Activated B cell treated with CpG ODN at 0.5 μM for 24 hours (primary cell): ENCODE measurements at regions of chr11 and their contacts with region 1.

Region 1: GRCh38 chr11:67572747-67573419 is 10.7 kb upstream of the GSTP1 start:
- DNase-seq: no peak
- ATAC-seq: peak; percentile 28
- H3K4me3 Mint-ChIP-seq: no peak overlapping the region
- H3K27ac Mint-ChIP-seq: no peak overlapping the region
- H3K4me1 Mint-ChIP-seq: peaks cover 9% of the 10 kb centered on the region
- H3K27me3 Mint-ChIP-seq: peaks cover 25% of the 10 kb centered on the region
- CTCF ChIP-seq: no peak

Region 2: GRCh38 chr11:67583247-67584204 is 10.6 kb after region 1 on chr11 and contains the start of gene GSTP1:
- CTCF ChIA-PET with region 1: interaction called, 5 read pairs
- POLR2A ChIA-PET with region 1: interaction called, 6 read pairs
- intact Hi-C with region 1: loop called (anchors 1 kb)
- DNase-seq: peak; percentile 84
- ATAC-seq: peak; percentile 76
- H3K4me3 Mint-ChIP-seq: peak within 1 kb of the TSS; percentile 89
- H3K27ac Mint-ChIP-seq: peak within 1 kb of the TSS; percentile 99
- H3K4me1 Mint-ChIP-seq: peaks cover 76% of the 10 kb centered on the region
- H3K27me3 Mint-ChIP-seq: no peaks in the 10 kb centered on the region
- CTCF ChIP-seq: no peak
- total RNA-seq, gene GSTP1: 331 and 362 TPM in 2 replicates

Region 3: DNA sequence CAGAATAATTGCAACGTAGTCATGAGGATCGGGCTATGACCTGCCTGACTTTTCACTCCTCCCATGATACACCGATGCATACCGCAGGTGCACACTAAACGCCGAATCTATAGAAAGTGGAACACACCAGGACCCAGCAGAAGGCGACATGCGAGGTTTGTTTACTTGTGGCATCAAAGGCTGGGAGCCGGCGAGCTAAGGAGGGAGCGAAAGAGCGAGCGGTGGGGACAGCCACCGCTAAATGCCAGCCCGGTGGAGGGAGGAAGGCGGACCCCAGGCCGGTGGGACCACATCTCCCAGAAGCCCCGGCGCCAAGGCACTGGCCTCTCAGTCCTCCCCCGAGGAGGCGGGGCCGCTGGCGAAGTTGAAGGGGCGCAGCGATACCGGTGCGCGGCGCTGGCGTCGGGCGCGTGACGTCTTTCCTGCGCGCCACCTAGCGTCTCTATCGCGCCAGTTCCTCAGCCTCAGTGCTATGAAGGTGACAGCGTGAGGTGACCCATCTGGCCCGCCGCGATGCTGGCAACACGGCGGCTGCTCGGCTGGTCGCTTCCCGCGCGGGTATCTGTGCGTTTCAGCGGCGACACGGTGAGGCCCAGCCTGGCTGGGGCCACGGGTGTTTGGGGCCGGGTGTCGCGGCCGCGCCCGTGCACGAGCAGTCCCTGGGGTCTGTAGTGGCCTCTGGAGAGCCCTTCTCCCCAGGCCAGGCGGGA is 33.8 kb after region 1 on chr11 and contains the start of gene NDUFV1:
- CTCF ChIA-PET with region 1: interaction called, 4 read pairs
- POLR2A ChIA-PET with region 1: no interaction called
- intact Hi-C with region 1: loop called (anchors 1 kb)
- DNase-seq: peak; percentile 93
- ATAC-seq: peak; percentile 99
- H3K4me3 Mint-ChIP-seq: peak within 1 kb of the TSS; percentile 90
- H3K27ac Mint-ChIP-seq: peak within 1 kb of the TSS; percentile 73
- H3K4me1 Mint-ChIP-seq: peaks cover 24% of the 10 kb centered on the region
- H3K27me3 Mint-ChIP-seq: peaks cover 11% of the 10 kb centered on the region
- CTCF ChIP-seq: no peak
- total RNA-seq, gene NDUFV1: 207 and 221 TPM in 2 replicates

Region 4: GRCh38 chr11:67613960-67614715 is 41.3 kb after region 1 on chr11:
- CTCF ChIA-PET with region 1: interaction called, 12 read pairs
- POLR2A ChIA-PET with region 1: interaction called, 6 read pairs
- intact Hi-C with region 1: loop called (anchors 2 kb)
- DNase-seq: peak; percentile 81
- ATAC-seq: peak; percentile 95
- H3K4me3 Mint-ChIP-seq: peak overlapping the region; percentile 84
- H3K27ac Mint-ChIP-seq: peak overlapping the region; percentile 99
- H3K4me1 Mint-ChIP-seq: peaks cover 41% of the 10 kb centered on the region
- H3K27me3 Mint-ChIP-seq: no peaks in the 10 kb centered on the region
- CTCF ChIP-seq: no peak

Region 5: GRCh38 chr11:67630228-67630942 is 57.5 kb after region 1 on chr11:
- CTCF ChIA-PET with region 1: interaction called, 16 read pairs
- POLR2A ChIA-PET with region 1: interaction called, 3 read pairs
- intact Hi-C with region 1: loop called (anchors 1 kb)
- DNase-seq: peak; percentile 92
- ATAC-seq: peak; percentile 78
- H3K4me3 Mint-ChIP-seq: peak overlapping the region; percentile 87
- H3K27ac Mint-ChIP-seq: peak overlapping the region; percentile 88
- H3K4me1 Mint-ChIP-seq: peaks cover 13% of the 10 kb centered on the region
- H3K27me3 Mint-ChIP-seq: no peaks in the 10 kb centered on the region
- CTCF ChIP-seq: no peak

Region 6: DNA sequence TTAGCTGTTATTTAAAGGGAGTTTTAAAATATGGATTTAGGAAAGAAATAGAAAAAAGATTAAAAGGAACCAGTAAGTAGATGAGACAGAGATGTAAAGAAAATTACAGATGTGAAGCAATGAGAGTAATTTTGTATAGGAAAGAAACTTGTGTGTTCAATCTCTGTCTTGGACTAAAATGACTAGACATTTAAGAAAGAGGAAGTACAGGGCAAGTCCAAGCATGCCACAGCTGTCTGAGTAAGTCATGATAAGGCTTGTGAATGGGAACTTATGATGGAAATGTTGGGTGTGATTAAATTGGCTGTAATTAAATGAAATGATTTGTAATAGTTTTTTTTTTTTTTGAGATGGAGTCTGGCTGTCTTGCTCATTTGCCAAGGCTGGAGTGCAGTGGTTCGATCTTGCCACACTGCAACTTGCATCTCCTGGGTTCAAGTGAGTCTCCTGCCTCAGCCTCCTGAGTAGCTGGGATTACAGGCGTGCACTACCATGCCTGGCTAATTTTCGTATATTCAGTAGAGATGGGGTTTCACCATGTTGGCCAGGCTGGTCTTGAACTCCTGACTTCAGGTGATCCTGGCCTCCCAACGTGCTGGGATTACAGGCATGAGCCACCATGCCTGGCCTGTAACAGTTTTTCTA is 83.5 kb after region 1 on chr11:
- CTCF ChIA-PET with region 1: interaction called, 6 read pairs
- POLR2A ChIA-PET with region 1: no interaction called
- intact Hi-C with region 1: loop called (anchors 1 kb)
- DNase-seq: no peak
- ATAC-seq: peak; percentile 43
- H3K4me3 Mint-ChIP-seq: no peak overlapping the region
- H3K27ac Mint-ChIP-seq: no peak overlapping the region
- H3K4me1 Mint-ChIP-seq: peaks cover 8% of the 10 kb centered on the region
- H3K27me3 Mint-ChIP-seq: no peaks in the 10 kb centered on the region
- CTCF ChIP-seq: no peak

Region 7: DNA sequence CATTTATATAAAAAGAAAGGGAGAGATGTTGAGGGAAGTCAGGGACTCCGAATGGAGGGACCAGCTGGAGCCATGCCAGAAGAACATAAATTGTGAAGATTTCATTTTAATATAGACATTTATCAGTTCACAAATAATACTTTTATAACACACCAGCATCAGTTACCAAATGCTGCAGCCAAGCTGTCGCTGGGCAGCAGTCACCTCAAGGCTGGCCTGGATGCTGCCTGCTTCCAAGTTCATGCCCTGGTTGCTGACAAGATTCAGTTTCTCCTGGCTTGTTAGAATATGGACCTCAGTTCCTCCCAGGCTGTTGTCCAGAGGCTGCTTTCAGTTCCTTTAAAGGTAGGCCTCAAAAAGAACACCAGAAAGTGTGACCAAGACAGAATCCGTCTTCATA is 132.4 kb after region 1 on chr11:
- CTCF ChIA-PET with region 1: no interaction called
- POLR2A ChIA-PET with region 1: no interaction called
- intact Hi-C with region 1: loop called (anchors 10 kb)
- DNase-seq: no peak
- ATAC-seq: no peak
- H3K4me3 Mint-ChIP-seq: no peak overlapping the region
- H3K27ac Mint-ChIP-seq: no peak overlapping the region
- H3K4me1 Mint-ChIP-seq: no peaks in the 10 kb centered on the region
- H3K27me3 Mint-ChIP-seq: peaks cover 19% of the 10 kb centered on the region
- CTCF ChIP-seq: no peak

Region 8: GRCh38 chr11:68121067-68121899 is 548.4 kb after region 1 on chr11 and contains the start of gene CHKA:
- CTCF ChIA-PET with region 1: no interaction called
- POLR2A ChIA-PET with region 1: no interaction called
- intact Hi-C with region 1: no loop called
- DNase-seq: peak; percentile 92
- ATAC-seq: peak; percentile 94
- H3K4me3 Mint-ChIP-seq: peak within 1 kb of the TSS; percentile 87
- H3K27ac Mint-ChIP-seq: peak within 1 kb of the TSS; percentile 87
- H3K4me1 Mint-ChIP-seq: peaks cover 29% of the 10 kb centered on the region
- H3K27me3 Mint-ChIP-seq: no peaks in the 10 kb centered on the region
- CTCF ChIP-seq: no peak
- total RNA-seq, gene CHKA: 11.9 and 16.1 TPM in 2 replicates